ENCODE measurements at regions of chr19 and their contacts with region 1.

Region 1: GRCh38 chr19:19531951-19532805 is 3.5 kb downstream of the YJEFN3 start:
- DNase-seq: peak; percentile 93
- ATAC-seq: peak; percentile 82

Region 2: GRCh38 chr19:19643158-19644053 is 111.2 kb after region 1 on chr19 and contains the start of gene GMIP:
- intact Hi-C with region 1: loop called (anchors 2 kb)
- DNase-seq: peak; percentile 90
- ATAC-seq: peak; percentile 90
- total RNA-seq, gene GMIP: 3.0 TPM

Region 3: GRCh38 chr19:19943848-19944582 is 411.8 kb after region 1 on chr19:
- intact Hi-C with region 1: loop called (anchors 10 kb)
- DNase-seq: no peak
- ATAC-seq: no peak